ENCODE measurements at regions of chr17 and their contacts with region 1.

Region 1: GRCh38 chr17:28726226-28727130 is at the start of gene TLCD1:
- DNase-seq: no peak
- H3K4me3 ChIP-seq: peak within 1 kb of the TSS; percentile 72
- CTCF ChIP-seq: peak; percentile 100

Region 2: DNA sequence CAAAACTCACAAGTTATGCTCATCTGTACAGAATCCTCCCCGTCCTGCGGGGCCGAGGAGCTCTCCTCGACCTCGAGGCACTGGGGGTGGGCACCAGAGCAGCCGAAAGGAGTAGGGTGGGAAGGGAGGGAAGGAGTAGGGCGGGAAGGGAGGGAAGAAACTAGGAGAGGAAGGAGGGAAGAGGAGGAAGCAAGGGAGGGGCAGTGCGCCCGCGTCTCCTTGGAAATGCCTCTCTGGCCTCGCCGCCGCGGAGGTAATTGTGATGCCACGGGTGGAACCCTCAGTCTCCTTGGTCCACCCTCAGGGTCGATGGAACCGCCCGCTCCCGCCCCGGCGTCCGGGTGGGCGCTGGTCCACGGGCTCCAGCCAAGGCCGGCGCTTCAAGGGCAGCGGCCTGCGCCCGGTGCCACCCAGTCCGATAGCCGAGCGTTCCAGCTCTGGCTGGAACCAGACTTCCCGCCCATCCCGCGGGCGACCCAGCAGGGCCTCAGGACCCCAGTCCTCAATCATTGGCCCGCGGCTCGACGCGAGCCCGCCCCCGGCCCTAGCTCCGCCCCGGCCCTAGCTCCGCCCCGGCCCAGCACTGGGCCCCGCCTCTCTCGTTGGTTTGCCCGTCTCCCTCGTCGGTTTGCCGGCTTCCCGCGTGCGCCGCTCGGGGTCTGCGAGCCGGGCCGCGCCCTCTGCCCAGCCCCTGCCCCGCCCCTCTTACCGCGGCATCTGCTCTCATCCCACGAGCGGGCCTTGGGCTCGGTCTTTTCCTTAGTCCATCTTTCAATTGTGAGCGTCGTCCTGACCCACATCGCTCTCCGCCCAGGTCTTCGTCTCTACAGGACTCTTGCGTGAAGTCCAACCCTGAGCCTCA is 15.4 kb before region 1 on chr17:
- CTCF ChIA-PET with region 1: interaction called, 8 read pairs
- POLR2A ChIA-PET with region 1: interaction called, 12 read pairs
- DNase-seq: no peak
- H3K4me3 ChIP-seq: peak overlapping the region; percentile 65
- CTCF ChIP-seq: no peak

Region 3: GRCh38 chr17:28763804-28764266 is 37.4 kb after region 1 on chr17:
- CTCF ChIA-PET with region 1: interaction called, 80 read pairs
- POLR2A ChIA-PET with region 1: interaction called, 6 read pairs
- DNase-seq: peak; percentile 29
- H3K4me3 ChIP-seq: no peak overlapping the region
- CTCF ChIP-seq: peak; percentile 69

Region 4: DNA sequence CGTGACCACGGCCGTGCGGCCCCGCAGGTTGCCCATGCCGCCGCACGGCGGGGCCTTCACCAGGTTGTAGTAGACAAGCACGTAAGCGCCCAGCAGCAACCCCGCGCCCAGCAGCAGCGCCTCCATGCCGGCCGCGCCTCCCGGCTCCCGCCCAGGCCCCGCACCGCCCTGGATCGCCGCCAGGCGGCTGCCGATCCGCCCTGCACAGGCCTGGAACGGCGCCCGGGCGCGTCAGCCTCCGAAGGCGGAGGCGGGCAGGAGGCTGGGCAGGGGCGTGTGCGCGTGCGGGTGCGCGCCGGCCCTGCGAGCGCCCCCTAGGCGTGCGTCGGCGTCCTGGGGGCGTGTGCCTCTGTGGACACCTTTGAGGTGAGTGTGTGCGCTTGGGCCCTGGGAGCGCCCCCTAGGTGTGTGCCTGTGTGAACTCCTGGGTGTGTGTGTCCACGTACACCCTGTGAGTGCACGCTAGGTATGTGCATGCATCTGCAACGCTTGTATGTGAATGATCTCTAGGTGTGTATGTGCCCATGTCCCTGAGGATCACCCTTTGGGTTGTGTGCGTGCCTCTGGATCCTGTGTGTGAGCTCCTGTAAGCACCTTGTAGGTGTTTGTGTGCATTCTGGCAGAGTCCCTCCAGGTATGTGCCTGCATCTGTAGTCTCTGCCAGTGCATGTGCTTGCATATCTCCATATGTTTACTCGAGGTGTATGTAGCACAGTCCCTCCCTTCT is 176.5 kb after region 1 on chr17 and contains the start of gene DHRS13:
- CTCF ChIA-PET with region 1: interaction called, 58 read pairs
- POLR2A ChIA-PET with region 1: interaction called, 5 read pairs
- DNase-seq: no peak
- H3K4me3 ChIP-seq: peak within 1 kb of the TSS; percentile 65
- CTCF ChIP-seq: peak; percentile 71

Region 5: DNA sequence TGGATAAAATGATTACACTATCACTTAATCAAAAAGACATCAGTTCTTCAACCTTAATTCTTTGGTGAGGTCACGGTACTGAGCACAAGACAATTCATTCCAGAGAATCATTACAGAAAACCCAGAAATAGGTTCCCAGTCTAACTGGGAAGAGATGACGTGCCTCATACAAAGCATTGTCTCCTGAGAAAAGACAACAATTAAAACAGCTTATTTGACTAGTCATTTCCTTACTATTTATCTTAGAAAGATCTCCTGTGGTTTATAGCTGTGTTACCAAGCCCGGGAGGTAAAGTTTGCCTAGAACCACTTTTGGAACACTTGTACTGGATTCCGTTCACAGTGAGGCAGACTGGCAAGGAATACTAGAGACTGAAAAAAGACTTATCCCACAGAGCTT is 219.8 kb after region 1 on chr17:
- CTCF ChIA-PET with region 1: interaction called, 155 read pairs
- POLR2A ChIA-PET with region 1: interaction called, 14 read pairs
- DNase-seq: no peak
- H3K4me3 ChIP-seq: peak overlapping the region; percentile 18
- CTCF ChIP-seq: no peak

Region 6: DNA sequence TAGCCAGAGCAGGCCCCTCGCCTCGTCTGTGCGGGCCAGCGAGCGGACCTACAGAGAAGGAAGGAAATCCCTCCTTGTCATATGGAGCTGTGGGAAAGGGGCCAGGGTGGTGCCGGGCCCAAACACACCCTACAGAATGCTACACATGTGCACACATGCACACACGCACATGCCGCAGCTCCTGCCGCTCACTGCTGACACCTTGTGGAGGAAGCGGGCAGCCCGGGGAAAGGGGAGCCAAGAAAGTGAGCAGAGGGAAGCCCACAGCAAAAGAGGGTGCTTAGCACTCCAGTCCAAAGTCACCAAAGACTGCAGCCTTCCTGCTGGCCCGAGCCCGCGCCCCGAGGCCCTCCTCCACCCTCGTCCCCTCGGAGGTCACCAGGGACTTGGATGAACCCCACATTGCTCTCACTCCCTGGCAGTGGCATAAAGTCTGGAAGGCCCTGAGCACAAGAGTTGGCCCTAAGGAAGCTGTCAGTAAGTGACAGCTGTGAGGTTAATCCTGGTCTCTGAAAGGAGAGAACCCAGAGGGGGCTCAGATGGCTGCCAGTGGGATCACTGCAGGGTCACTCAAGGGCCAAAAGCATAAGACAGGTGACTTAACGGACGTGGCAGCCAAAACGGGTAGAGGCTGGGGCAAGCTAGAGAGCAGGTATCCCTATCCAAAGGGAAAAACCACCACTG is 385.5 kb after region 1 on chr17:
- CTCF ChIA-PET with region 1: interaction called, 34 read pairs
- POLR2A ChIA-PET with region 1: interaction called, 12 read pairs
- DNase-seq: no peak
- H3K4me3 ChIP-seq: no peak overlapping the region
- CTCF ChIP-seq: peak; percentile 98

Measured in AG04449 (cell line).